GM10248 (cell line): ENCODE measurements at regions of chr4 and their contacts with region 1.

Region 1: GRCh38 chr4:86918539-86919072 is 16.2 kb upstream of the AFF1 start:
- DNase-seq: no peak
- CTCF ChIP-seq: no peak

Region 2: DNA sequence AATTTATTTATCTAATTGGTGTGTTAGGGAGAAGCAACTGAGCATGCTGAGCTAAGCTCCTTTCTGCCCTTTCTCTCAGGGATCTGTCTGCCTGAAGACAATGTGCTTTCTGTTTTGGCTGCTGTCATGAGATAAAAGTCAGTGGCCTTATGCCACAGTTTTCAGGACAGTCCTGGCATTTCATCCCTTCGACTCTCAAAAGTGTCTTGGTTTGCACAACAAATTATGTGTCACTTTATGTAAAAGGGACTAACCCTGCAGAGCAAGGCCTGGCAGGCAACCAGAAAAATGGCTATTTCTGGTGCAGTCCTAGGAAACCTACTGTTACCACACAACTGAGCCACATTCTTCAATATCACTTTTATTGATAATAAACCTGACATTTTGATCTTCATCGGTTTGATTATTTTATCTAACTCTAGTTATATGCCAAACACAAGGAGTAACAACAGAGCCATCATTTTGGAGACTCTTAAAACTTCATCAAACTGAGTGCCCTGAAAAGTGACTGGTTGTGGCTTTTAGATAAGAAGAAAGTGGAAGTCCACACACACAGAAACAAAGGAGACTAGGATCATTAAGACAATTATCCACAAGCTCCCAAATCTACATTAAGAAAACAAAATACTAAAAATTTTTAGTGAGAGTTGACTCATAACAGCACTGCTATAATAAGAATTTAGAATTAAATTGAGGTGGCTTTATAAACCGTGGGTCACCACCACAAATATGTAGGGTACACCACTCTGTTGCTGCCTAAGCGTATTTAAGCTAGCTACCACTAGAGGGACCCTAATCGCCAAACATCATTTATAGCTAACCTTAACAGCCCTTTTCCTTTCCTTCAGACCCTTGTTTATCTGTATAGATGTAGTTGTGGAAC is 420.4 kb before region 1 on chr4:
- CTCF ChIA-PET with region 1: interaction called, 40 read pairs
- POLR2A ChIA-PET with region 1: no interaction called
- DNase-seq: peak; percentile 32
- CTCF ChIP-seq: peak; percentile 87

Region 3: GRCh38 chr4:86653237-86653865 is 265.3 kb before region 1 on chr4:
- CTCF ChIA-PET with region 1: no interaction called
- POLR2A ChIA-PET with region 1: no interaction called
- DNase-seq: no peak
- CTCF ChIP-seq: no peak

Region 4: GRCh38 chr4:86947501-86948120 is 29.0 kb after region 1 on chr4:
- CTCF ChIA-PET with region 1: interaction called, 13 read pairs
- POLR2A ChIA-PET with region 1: interaction called, 3 read pairs
- DNase-seq: no peak
- CTCF ChIP-seq: no peak

Region 5: GRCh38 chr4:87006676-87007527 is 88.3 kb after region 1 on chr4:
- CTCF ChIA-PET with region 1: interaction called, 14 read pairs
- POLR2A ChIA-PET with region 1: interaction called, 15 read pairs
- DNase-seq: peak; percentile 82
- CTCF ChIP-seq: no peak

Region 6: DNA sequence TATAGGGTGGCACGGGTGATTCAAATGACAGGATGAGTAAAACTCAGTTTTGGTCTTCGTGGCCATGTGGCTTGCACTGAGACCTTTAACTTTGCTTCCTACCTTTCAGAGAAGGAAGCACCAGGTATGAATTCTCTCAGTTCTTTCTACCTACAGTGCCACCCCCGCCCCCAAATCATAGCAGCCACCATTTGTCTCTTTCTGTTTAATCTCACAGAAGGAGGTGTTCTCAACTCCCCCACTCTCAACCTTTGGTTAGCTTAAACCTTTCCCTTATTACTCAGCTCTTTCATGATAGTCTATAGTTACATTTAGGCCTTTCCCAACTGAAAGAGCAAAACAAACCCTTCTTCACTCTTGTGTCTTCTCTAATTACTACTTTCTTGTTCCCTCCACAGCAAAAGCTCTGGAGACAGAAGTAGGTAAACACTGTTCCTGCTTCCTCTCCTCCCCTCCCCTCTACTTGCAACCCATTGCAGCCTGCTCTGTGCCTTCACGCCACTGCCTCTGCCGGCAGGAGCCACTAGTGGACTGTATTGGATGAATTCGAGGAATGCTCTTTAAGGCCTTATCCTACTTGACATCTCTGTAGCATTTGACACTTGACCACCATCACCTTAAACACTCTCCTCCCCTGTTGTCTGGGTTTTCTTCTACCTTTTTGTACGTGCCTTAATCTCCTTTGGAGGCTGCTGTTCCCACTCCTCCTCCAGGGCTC is 139.9 kb after region 1 on chr4:
- CTCF ChIA-PET with region 1: interaction called, 10 read pairs
- POLR2A ChIA-PET with region 1: no interaction called
- DNase-seq: no peak
- CTCF ChIP-seq: no peak

Region 7: DNA sequence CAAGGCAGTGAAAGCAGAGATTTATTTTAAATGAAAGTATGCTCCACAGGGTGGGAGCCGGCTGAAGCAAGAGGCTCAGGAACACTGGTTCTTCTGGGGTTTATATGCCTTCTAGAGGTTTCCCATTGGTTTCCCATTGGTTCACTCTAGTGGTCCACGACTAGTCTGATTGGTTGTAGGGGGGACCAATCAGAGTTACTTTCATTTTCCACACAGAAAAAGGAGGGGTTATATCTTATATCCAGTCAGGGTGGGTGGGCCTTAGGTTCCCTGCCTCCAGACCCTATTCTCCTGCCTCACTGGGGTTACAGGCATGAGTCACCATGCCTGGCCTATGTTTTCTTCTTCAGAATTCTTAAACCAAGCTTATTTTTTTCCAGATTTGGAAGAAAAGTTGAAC is 200.2 kb after region 1 on chr4:
- CTCF ChIA-PET with region 1: interaction called, 26 read pairs
- POLR2A ChIA-PET with region 1: no interaction called
- DNase-seq: no peak
- CTCF ChIP-seq: no peak

Region 8: GRCh38 chr4:87220094-87220822 is 301.7 kb after region 1 on chr4 and contains the start of gene KLHL8:
- CTCF ChIA-PET with region 1: interaction called, 10 read pairs
- POLR2A ChIA-PET with region 1: interaction called, 5 read pairs
- DNase-seq: peak; percentile 96
- CTCF ChIP-seq: no peak